ENCODE measurements at regions of chr11 and their contacts with region 1.

Region 1: DNA sequence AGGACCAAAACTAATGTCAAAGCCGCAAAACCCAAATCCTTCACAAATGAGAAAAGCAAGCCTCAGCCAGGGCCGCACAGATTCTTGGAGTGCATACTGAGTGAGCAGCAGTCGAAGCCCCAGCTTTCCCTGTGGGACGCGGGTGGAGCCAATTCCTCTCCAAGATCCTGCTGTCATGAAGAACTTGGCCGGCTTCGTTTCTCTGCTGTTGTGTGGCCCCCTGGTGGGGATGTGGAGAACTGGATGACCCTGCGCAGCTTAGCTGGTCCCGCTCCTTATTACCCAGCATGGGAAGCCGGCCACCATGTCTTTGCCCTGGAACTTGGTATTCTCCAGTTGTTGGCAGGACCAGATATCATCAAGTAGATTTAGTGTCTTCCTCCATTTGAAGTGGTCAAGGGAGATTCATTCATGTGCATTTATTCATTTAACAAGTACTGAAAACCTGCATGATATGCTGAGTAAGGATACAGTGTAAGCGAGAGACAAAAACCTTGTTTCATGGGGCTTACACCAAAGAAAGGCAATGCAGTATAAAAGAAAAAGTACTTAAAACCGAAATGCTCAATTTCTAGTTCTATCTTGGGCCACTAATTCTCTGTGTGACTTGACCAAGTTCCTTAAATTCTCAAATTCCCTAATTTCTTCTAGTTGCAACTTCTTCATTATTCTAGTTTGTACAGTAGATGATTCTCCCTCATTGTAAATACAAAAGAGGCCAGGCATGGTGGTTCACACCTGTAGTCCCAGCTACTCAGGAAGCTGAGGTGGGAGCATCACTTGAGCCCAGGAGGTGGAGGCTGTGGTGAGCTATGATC is 56.7 kb upstream of the CRTAM start:
- DNase-seq: peak; percentile 74 to 81 (median 78)
- ATAC-seq: peak; percentile 99
- H3K4me3 ChIP-seq: no peak overlapping the region
- H3K27ac ChIP-seq: no peak overlapping the region
- H3K4me1 ChIP-seq: no peaks in the 10 kb centered on the region
- H3K27me3 ChIP-seq: peaks cover 2 to 19% of the 10 kb centered on the region in 2 experiments; a peak in 1 of 5 replicates
- CTCF ChIP-seq: peak; percentile 78 to 81 (median 79)
- EP300 ChIP-seq: no peak
- POLR2A ChIP-seq: no peak
- RAD21 ChIP-seq: peak; percentile 68 to 82

Region 2: GRCh38 chr11:122578168-122578825 is 203.3 kb before region 1 on chr11:
- CTCF ChIA-PET with region 1: interaction called, 5 read pairs
- POLR2A ChIA-PET with region 1: no interaction called
- in situ Hi-C with region 1: no loop called
- intact Hi-C with region 1: loop called (anchors 1 kb)
- DNase-seq: peak in 1 of 4 experiments; percentile 23
- ATAC-seq: peak; percentile 84
- H3K4me3 ChIP-seq: no peak overlapping the region
- H3K27ac ChIP-seq: no peak overlapping the region
- H3K4me1 ChIP-seq: no peaks in the 10 kb centered on the region
- H3K27me3 ChIP-seq: no peaks in the 10 kb centered on the region
- CTCF ChIP-seq: peak; percentile 31 to 46 (median 36); a peak in 3 of 6 replicates
- EP300 ChIP-seq: no peak
- POLR2A ChIP-seq: no peak
- RAD21 ChIP-seq: peak in 1 of 2 experiments; percentile 30; a peak in 1 of 4 replicates

Region 3: GRCh38 chr11:122628810-122629555 is 152.6 kb before region 1 on chr11:
- CTCF ChIA-PET with region 1: interaction called, 3 read pairs
- POLR2A ChIA-PET with region 1: no interaction called
- in situ Hi-C with region 1: no loop called
- intact Hi-C with region 1: loop called (anchors 1 kb)
- DNase-seq: peak; percentile 37 to 59 (median 46)
- ATAC-seq: peak; percentile 93
- H3K4me3 ChIP-seq: no peak overlapping the region
- H3K27ac ChIP-seq: no peak overlapping the region
- H3K4me1 ChIP-seq: no peaks in the 10 kb centered on the region
- H3K27me3 ChIP-seq: peaks cover 0 to 4% of the 10 kb centered on the region in 2 experiments; a peak in 1 of 5 replicates
- CTCF ChIP-seq: peak; percentile 71 to 75 (median 74)
- EP300 ChIP-seq: no peak
- POLR2A ChIP-seq: no peak
- RAD21 ChIP-seq: peak; percentile 44 to 61

Region 4: GRCh38 chr11:122637541-122637940 is 144.0 kb before region 1 on chr11:
- CTCF ChIA-PET with region 1: interaction called, 3 read pairs
- POLR2A ChIA-PET with region 1: interaction called, 5 read pairs
- in situ Hi-C with region 1: loop called (anchors 5 kb)
- intact Hi-C with region 1: loop called (anchors 1 kb)
- DNase-seq: no peak
- ATAC-seq: no peak
- H3K4me3 ChIP-seq: no peak overlapping the region
- H3K27ac ChIP-seq: no peak overlapping the region
- H3K4me1 ChIP-seq: no peaks in the 10 kb centered on the region
- H3K27me3 ChIP-seq: peaks cover 2 to 11% of the 10 kb centered on the region in 2 experiments; a peak in 1 of 5 replicates
- CTCF ChIP-seq: no peak
- EP300 ChIP-seq: no peak
- POLR2A ChIP-seq: no peak
- RAD21 ChIP-seq: no peak